ENCODE measurements at regions of chr17 and their contacts with region 1.

Region 1: GRCh38 chr17:75012346-75013091 is at the start of gene MRPL58:
- DNase-seq: peak; percentile 59 to 90 (median 79)
- ATAC-seq: peak; percentile 92
- H3K4me3 ChIP-seq: peak within 1 kb of the TSS; percentile 82 to 85
- H3K4me3 Mint-ChIP-seq: peak within 1 kb of the TSS; percentile 93
- H3K27ac ChIP-seq: peak within 1 kb of the TSS; percentile 77 to 79
- H3K27ac Mint-ChIP-seq: peak within 1 kb of the TSS; percentile 94
- H3K4me1 ChIP-seq: peaks cover 15% of the 10 kb centered on the region
- H3K4me1 Mint-ChIP-seq: peaks cover 33% of the 10 kb centered on the region
- H3K27me3 ChIP-seq: no peaks in the 10 kb centered on the region
- H3K27me3 Mint-ChIP-seq: no peaks in the 10 kb centered on the region
- CTCF ChIP-seq: peak; percentile 59
- total RNA-seq, gene MRPL58: 9.2 to 11.2 TPM

Region 2: DNA sequence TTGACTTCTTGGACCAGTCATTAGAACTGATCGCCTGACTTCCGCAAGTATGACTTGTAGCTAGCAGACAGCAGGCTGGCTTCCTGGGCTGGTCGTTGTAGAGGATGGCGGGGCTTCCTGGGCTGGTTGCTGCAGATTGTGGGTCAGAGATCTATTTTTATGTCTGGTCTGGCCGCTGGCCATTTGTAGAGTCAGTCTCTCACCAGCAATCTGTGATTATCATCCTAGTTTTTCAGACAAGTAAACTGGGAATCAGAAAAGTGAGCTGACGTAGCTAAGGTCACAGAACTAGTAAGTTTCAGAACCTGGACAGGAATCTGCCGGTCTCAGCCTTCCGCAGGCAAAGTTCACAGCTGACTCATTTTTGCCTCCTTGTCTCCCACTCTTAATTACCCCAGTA is 626.1 kb before region 1 on chr17:
- CTCF ChIA-PET with region 1: no interaction called
- POLR2A ChIA-PET with region 1: no interaction called
- intact Hi-C with region 1: no loop called
- DNase-seq: no peak
- ATAC-seq: no peak
- H3K4me3 ChIP-seq: no peak overlapping the region
- H3K4me3 Mint-ChIP-seq: no peak overlapping the region
- H3K27ac ChIP-seq: no peak overlapping the region
- H3K27ac Mint-ChIP-seq: no peak overlapping the region
- H3K4me1 ChIP-seq: no peaks in the 10 kb centered on the region
- H3K4me1 Mint-ChIP-seq: no peaks in the 10 kb centered on the region
- H3K27me3 ChIP-seq: no peaks in the 10 kb centered on the region
- H3K27me3 Mint-ChIP-seq: no peaks in the 10 kb centered on the region
- CTCF ChIP-seq: no peak

Region 3: GRCh38 chr17:74972107-74972972 is 40.2 kb before region 1 on chr17 and contains the start of gene HID1:
- CTCF ChIA-PET with region 1: interaction called, 5 read pairs
- POLR2A ChIA-PET with region 1: interaction called, 12 read pairs
- intact Hi-C with region 1: loop called in 1 of 2 experiments (anchors 1 kb)
- DNase-seq: peak; percentile 64 to 90 (median 80)
- ATAC-seq: peak; percentile 93
- H3K4me3 ChIP-seq: peak within 1 kb of the TSS; percentile 53 to 69
- H3K4me3 Mint-ChIP-seq: peak within 1 kb of the TSS; percentile 85
- H3K27ac ChIP-seq: peak within 1 kb of the TSS in 1 of 2 experiments; percentile 23
- H3K27ac Mint-ChIP-seq: peak within 1 kb of the TSS; percentile 52
- H3K4me1 ChIP-seq: peaks cover 10% of the 10 kb centered on the region
- H3K4me1 Mint-ChIP-seq: peaks cover 4% of the 10 kb centered on the region
- H3K27me3 ChIP-seq: peaks cover 3 to 9% of the 10 kb centered on the region in 2 experiments
- H3K27me3 Mint-ChIP-seq: peaks cover 11% of the 10 kb centered on the region
- CTCF ChIP-seq: no peak
- total RNA-seq, gene HID1: 25.9 to 26.4 TPM

Region 4: GRCh38 chr17:74981979-74982662 is 30.4 kb before region 1 on chr17:
- CTCF ChIA-PET with region 1: interaction called, 6 read pairs
- POLR2A ChIA-PET with region 1: interaction called, 17 read pairs
- intact Hi-C with region 1: loop called (anchors 2 kb)
- DNase-seq: peak; percentile 57 to 92 (median 78)
- ATAC-seq: peak; percentile 89
- H3K4me3 ChIP-seq: peak overlapping the region; percentile 66
- H3K4me3 Mint-ChIP-seq: peak overlapping the region; percentile 87
- H3K27ac ChIP-seq: peak overlapping the region; percentile 74 to 76
- H3K27ac Mint-ChIP-seq: peak overlapping the region; percentile 86
- H3K4me1 ChIP-seq: peaks cover 21% of the 10 kb centered on the region
- H3K4me1 Mint-ChIP-seq: peaks cover 21% of the 10 kb centered on the region
- H3K27me3 ChIP-seq: no peaks in the 10 kb centered on the region
- H3K27me3 Mint-ChIP-seq: peaks cover 5% of the 10 kb centered on the region
- CTCF ChIP-seq: no peak

Region 5: DNA sequence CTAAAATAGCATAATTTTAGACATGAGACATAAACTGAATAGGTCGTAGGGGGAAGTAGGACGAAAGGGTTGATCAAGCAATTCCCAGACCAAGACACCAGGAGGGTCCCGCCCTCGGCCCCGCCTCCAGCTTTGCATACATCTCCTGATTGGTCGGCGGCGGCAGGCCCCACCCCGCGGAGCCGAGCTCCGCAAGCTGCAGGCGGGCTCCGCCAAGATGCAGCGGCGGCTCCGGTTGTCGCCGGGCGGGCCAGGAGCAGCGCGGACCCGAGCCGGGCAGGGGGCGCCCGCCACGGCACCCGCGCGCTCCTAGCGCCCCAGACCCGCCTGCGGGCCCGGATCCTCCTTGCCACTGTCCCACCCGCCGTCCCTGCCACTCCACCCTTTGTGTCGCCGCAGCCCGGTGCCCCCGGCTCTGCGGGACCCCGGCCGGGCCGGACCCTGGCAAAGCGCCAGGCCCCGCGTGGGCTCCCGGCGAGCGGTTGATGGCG is 25.1 kb before region 1 on chr17 and contains the start of gene CDR2L:
- CTCF ChIA-PET with region 1: interaction called, 19 read pairs
- POLR2A ChIA-PET with region 1: interaction called, 17 read pairs
- intact Hi-C with region 1: loop called (anchors 2 kb)
- DNase-seq: peak; percentile 82 to 95 (median 92)
- ATAC-seq: peak; percentile 97
- H3K4me3 ChIP-seq: peak within 1 kb of the TSS; percentile 48 to 50
- H3K4me3 Mint-ChIP-seq: peak within 1 kb of the TSS; percentile 83
- H3K27ac ChIP-seq: no peak within 1 kb of the TSS
- H3K27ac Mint-ChIP-seq: no peak within 1 kb of the TSS
- H3K4me1 ChIP-seq: peaks cover 10% of the 10 kb centered on the region
- H3K4me1 Mint-ChIP-seq: peaks cover 15% of the 10 kb centered on the region
- H3K27me3 ChIP-seq: peaks cover 0 to 5% of the 10 kb centered on the region in 2 experiments
- H3K27me3 Mint-ChIP-seq: peaks cover 2% of the 10 kb centered on the region
- CTCF ChIP-seq: no peak
- total RNA-seq, gene CDR2L: 0.14 to 0.27 TPM

Region 6: DNA sequence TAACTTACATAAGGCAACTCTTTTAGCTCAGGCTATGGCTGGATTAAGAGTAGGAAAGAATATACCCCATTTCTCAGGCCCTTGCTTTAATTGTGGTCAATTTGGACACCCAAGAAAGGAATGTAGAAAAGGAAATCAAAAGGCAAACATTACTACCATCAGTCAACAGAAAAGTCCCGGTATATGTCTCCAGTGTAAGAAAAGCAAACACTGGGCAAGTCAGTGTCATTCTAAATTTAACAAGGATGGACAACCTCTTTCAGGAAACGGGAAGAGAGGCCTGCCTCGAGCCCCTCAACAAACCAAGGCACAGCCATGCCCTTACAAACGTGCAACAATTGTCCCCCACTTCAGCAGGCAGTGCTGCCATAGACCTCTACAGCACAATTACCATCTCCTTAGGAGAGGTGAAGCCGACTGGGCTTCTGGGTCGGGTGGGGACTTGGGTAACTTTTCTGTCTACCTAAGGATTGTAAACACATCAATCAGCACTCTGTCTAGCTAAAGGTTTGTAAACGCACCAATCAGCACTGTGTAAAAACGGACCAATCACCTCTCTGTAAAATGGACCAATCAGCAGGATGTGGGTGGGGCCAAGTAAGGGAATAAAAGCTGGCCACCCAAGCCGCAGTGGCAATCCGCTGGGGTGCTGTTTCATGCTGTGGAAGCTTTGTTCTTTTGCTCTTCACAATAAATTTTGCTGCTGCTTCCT is 12.3 kb after region 1 on chr17:
- CTCF ChIA-PET with region 1: interaction called, 10 read pairs
- POLR2A ChIA-PET with region 1: interaction called, 17 read pairs
- intact Hi-C with region 1: no loop called
- DNase-seq: peak in 5 of 9 experiments; percentile 42 to 61 (median 49)
- ATAC-seq: peak; percentile 57
- H3K4me3 ChIP-seq: no peak overlapping the region
- H3K4me3 Mint-ChIP-seq: peak overlapping the region; percentile 35
- H3K27ac ChIP-seq: no peak overlapping the region
- H3K27ac Mint-ChIP-seq: no peak overlapping the region
- H3K4me1 ChIP-seq: peaks cover 15% of the 10 kb centered on the region
- H3K4me1 Mint-ChIP-seq: peaks cover 19% of the 10 kb centered on the region
- H3K27me3 ChIP-seq: no peaks in the 10 kb centered on the region
- H3K27me3 Mint-ChIP-seq: no peaks in the 10 kb centered on the region
- CTCF ChIP-seq: no peak

Region 7: DNA sequence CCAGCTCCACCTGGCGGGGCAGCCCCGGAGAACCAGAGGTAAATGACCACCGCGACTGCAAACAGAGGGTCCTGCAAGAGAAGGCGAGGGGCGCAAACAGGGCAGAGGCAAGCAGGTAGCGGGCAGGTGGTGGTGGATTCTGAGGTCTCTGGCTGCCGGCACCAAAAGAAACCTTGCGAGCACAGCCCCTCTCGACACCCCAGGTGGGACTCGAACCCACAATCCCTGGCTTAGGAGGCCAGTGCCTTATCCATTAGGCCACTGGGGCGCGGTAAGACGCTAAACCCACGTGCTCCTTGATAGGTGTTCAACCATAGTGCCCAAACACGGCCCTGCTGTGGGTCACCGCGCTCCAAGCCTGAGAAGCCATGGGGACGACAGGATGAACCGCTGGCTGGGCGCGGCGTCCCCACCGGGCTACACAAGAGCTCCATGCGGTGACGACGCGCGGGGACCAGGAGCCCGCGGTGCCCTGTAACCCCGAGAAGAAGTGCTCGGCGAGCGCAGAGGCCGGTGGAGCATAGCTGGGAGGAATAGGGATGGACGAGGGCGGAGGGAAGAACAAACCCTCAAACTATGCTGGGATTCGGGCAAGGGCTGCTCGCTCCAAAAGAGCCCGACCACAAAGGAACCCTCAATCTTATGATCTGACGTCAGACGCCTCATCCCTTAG is 21.9 kb after region 1 on chr17:
- CTCF ChIA-PET with region 1: interaction called, 17 read pairs
- POLR2A ChIA-PET with region 1: interaction called, 20 read pairs
- intact Hi-C with region 1: loop called (anchors 1 kb)
- DNase-seq: peak; percentile 63 to 87 (median 80)
- ATAC-seq: peak; percentile 17
- H3K4me3 ChIP-seq: peak overlapping the region; percentile 66 to 94
- H3K4me3 Mint-ChIP-seq: peak overlapping the region; percentile 92
- H3K27ac ChIP-seq: peak overlapping the region; percentile 53 to 56
- H3K27ac Mint-ChIP-seq: peak overlapping the region; percentile 98
- H3K4me1 ChIP-seq: peaks cover 45% of the 10 kb centered on the region
- H3K4me1 Mint-ChIP-seq: peaks cover 53% of the 10 kb centered on the region
- H3K27me3 ChIP-seq: no peaks in the 10 kb centered on the region
- H3K27me3 Mint-ChIP-seq: no peaks in the 10 kb centered on the region
- CTCF ChIP-seq: no peak

Region 8: DNA sequence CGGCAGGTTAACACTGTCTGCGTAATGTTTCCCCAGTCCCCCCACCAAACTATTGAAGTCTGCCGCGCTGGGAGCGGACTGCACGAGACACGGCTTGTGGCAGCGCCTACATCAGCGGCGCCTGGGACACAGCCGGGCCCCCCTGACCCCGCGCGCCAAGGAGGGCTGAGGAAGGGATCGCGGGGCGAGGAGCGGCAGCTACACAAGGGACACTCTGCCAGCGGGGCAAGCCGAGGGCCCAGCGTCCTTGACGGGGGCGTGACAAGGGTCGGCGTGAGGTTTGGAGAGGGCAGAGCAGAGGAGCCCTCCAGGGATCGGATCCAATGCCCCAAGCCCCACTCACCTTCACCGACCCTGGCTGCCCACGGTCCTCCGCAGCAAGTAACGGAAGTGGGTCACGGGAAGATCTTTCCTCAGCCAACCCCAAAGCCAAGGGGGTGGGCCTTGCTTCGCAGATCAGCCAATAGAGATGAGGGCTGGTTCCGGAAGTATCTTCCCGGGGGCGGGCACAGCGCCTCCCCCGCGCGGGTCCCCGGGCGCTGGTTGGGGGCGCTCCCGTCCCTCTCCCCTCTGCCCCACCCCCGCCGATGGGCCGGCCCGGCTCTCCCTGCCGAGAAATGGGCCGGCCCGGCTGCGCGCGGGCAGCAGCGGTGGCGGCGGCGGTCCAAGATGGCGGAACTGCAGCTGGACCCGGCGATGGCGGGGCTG is 34.2 kb after region 1 on chr17 and contains the starts of genes ATP5PD and KCTD2:
- CTCF ChIA-PET with region 1: interaction called, 5 read pairs
- POLR2A ChIA-PET with region 1: interaction called, 16 read pairs
- intact Hi-C with region 1: loop called (anchors 1 to 2 kb)
- DNase-seq: peak; percentile 81 to 97 (median 93)
- ATAC-seq: peak; percentile 91
- H3K4me3 ChIP-seq: peak within 1 kb of the TSS; percentile 99
- H3K4me3 Mint-ChIP-seq: peak within 1 kb of the TSS; percentile 99
- H3K27ac ChIP-seq: peak within 1 kb of the TSS; percentile 93 to 97
- H3K27ac Mint-ChIP-seq: peak within 1 kb of the TSS; percentile 98
- H3K4me1 ChIP-seq: peaks cover 21% of the 10 kb centered on the region
- H3K4me1 Mint-ChIP-seq: peaks cover 54% of the 10 kb centered on the region
- H3K27me3 ChIP-seq: no peaks in the 10 kb centered on the region
- H3K27me3 Mint-ChIP-seq: no peaks in the 10 kb centered on the region
- CTCF ChIP-seq: no peak
- total RNA-seq, gene ATP5PD: 69.9 to 71.6 TPM
- total RNA-seq, gene KCTD2: 29.4 to 31.7 TPM

Region 9: DNA sequence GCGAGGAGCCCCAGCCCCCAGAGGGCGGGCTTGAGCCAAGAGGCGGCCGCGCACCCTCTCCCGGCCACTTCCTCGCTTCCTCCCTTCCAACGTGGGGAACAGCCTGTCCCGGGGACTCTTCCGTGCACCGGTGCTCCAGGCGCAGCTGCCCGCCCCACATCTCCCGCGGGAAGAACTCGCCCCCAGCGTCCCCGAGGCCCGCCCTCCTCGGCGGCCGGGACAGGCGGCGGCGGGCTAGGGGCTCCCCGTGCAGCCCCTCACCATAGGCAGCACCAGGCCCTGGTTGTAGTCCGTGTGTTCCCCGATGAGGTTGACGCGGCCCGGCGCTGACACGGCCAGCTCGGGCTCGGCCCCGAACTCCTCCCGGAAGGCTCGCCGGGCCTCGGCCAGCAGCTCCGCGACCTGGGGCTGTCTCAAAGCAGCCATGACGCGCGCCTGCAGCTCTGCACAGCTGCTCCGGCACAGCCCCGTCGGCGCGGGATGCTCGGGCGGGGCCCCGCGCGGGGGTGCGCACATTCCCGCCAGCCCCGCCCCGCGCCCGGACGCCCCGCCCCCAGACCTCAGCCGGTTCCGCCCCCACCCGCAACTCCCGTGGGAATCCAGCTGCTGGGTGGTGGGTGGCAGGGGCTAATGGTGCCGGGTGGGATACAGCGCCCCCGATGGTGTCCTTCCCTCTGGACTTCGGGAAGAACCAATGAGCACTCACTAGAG is 752.3 kb after region 1 on chr17 and contains the start of gene GALK1:
- CTCF ChIA-PET with region 1: no interaction called
- POLR2A ChIA-PET with region 1: no interaction called
- intact Hi-C with region 1: no loop called
- DNase-seq: peak; percentile 46 to 89 (median 70)
- ATAC-seq: peak; percentile 94
- H3K4me3 ChIP-seq: peak within 1 kb of the TSS; percentile 62 to 86
- H3K4me3 Mint-ChIP-seq: peak within 1 kb of the TSS; percentile 74
- H3K27ac ChIP-seq: peak within 1 kb of the TSS; percentile 51 to 63
- H3K27ac Mint-ChIP-seq: peak within 1 kb of the TSS; percentile 55
- H3K4me1 ChIP-seq: peaks cover 16% of the 10 kb centered on the region
- H3K4me1 Mint-ChIP-seq: peaks cover 8% of the 10 kb centered on the region
- H3K27me3 ChIP-seq: no peaks in the 10 kb centered on the region
- H3K27me3 Mint-ChIP-seq: no peaks in the 10 kb centered on the region
- CTCF ChIP-seq: peak; percentile 40
- total RNA-seq, gene GALK1: 3.4 to 3.7 TPM